Lower leg skin (tissue), 4 donors: ENCODE measurements at regions of chr13 and their contacts with region 1.

Region 1: GRCh38 chr13:40933508-40934204 is 85.5 kb downstream of the ELF1 start:
- DNase-seq: no peak
- H3K4me3 ChIP-seq: no peak overlapping the region
- CTCF ChIP-seq: no peak
- POLR2A ChIP-seq: no peak

Region 2: DNA sequence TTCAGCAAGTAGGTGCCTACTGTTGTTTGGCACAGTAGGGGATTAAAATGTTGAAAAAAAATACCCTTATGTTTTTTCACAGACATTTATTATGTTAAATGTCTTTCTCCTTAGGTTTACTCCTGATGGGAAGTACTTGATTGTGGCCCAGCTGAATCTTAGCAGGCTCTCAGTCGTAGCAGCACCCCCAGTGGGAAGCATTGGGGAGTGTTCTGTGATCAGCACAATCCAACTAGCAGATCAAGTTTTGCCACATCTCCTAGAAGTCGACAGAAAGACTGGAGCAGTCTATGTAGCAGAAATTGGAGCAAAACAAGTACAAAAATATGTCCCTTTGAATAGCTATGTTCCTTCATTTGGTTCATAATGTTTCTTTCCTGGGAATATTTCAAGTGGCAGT is 1886.1 kb before region 1 on chr13:
- intact Hi-C with region 1: loop called (anchors 10 kb)
- DNase-seq: no peak
- H3K4me3 ChIP-seq: no peak overlapping the region
- CTCF ChIP-seq: no peak
- POLR2A ChIP-seq: no peak

Region 3: GRCh38 chr13:41327994-41328790 is 394.5 kb after region 1 on chr13:
- intact Hi-C with region 1: no loop called
- DNase-seq: no peak
- H3K4me3 ChIP-seq: no peak overlapping the region
- CTCF ChIP-seq: no peak
- POLR2A ChIP-seq: no peak